Psoas muscle (tissue), 8 donors: ENCODE measurements at regions of chr2 and their contacts with region 1.

Region 1: DNA sequence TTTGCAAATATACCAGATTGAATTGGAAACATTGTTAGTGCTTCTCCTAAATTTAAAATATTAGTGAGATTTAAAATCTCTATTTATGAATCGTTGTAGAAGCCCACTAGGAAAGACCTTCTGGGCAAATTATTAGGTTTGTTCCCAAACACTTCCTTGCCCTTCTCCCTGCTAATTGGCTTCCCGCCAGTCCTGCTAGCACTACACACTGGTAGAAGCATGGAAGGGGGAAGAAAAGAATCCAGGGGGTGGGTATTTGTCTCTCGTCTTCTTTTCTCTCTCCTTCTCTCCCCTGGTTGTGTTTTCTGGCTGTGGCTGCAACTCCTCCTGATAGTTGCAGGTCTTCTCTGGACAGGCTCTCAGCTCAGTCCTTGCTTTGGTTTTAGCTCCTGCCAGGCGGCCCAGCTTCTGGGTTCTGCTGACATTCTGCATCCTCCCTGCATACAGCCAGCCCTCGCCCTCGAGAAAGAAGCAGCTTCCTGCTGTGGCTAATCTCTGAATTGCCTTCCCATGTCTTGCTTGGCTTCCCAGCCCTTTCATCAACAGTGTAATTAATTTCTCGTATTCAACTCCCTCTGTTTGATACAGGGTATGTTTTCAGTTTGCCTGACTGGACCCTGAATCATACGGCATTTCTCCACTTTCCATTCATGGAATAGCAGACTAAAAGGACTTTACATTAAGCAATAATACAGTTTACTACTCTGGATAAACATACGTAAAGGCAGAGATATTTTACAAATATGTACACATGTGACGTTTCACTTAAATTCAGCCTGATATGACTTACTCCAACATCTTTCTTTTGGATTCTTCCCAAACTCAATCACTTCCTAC is 6.9 kb upstream of the PARD3B start:
- DNase-seq: no peak
- ATAC-seq: no peak
- H3K4me3 ChIP-seq: no peak overlapping the region
- H3K27ac ChIP-seq: no peak overlapping the region
- H3K4me1 ChIP-seq: no peaks in the 10 kb centered on the region
- H3K27me3 ChIP-seq: no peaks in the 10 kb centered on the region
- CTCF ChIP-seq: no peak

Region 2: DNA sequence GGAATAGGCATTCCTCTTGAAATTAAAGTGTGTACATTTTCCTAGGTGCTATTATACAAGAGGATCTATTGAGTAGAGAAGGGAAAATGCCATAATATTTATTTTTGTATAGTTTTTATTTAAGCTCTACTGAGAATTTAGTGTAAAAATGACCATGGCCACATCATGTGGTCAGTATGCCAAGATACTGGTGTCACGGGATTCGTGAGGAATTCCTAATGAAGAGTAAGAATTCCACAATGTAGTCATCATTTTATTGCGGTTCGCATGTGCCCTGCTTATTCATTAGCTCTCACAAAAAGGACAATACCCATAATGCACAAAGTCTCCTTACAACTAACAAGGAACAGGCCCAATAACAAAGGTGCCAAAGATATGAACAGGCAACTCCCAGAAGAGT is 32.5 kb before region 1 on chr2:
- intact Hi-C with region 1: loop called in 1 of 2 experiments (anchors 1 kb)
- DNase-seq: no peak
- ATAC-seq: no peak
- H3K4me3 ChIP-seq: no peak overlapping the region
- H3K27ac ChIP-seq: no peak overlapping the region
- H3K4me1 ChIP-seq: no peaks in the 10 kb centered on the region
- H3K27me3 ChIP-seq: no peaks in the 10 kb centered on the region
- CTCF ChIP-seq: no peak

Region 3: DNA sequence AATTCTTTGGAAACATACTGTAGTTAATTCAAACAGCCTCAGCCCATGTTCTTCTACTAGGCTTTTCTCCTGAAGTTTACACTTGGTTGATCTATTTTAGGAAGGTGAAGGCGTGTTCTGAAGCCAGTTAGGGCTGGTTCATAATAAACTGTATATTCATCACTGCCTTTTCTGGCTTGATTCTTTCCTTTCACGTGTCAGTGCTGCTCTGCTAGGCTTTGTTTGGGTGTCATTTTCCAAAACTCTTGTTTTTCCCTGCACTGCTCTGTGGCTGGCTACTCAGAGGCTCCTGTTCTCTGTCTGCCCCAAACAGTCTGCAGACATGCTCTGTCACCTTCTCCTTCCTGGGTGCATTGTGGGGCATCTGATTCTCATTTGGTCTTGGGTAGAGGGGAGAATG is 143.0 kb after region 1 on chr2:
- intact Hi-C with region 1: no loop called
- DNase-seq: no peak
- ATAC-seq: peak in 1 of 4 donors; percentile 60
- H3K4me3 ChIP-seq: no peak overlapping the region
- H3K27ac ChIP-seq: no peak overlapping the region
- H3K4me1 ChIP-seq: no peaks in the 10 kb centered on the region
- H3K27me3 ChIP-seq: no peaks in the 10 kb centered on the region
- CTCF ChIP-seq: no peak

Region 4: GRCh38 chr2:204972606-204973336 is 434.4 kb after region 1 on chr2:
- intact Hi-C with region 1: no loop called
- DNase-seq: no peak
- ATAC-seq: no peak
- H3K4me3 ChIP-seq: no peak overlapping the region
- H3K27ac ChIP-seq: no peak overlapping the region
- H3K4me1 ChIP-seq: no peaks in the 10 kb centered on the region
- H3K27me3 ChIP-seq: no peaks in the 10 kb centered on the region
- CTCF ChIP-seq: no peak